MCF 10A (cell line): ENCODE measurements at regions of chr20 and their contacts with region 1.

Region 1: DNA sequence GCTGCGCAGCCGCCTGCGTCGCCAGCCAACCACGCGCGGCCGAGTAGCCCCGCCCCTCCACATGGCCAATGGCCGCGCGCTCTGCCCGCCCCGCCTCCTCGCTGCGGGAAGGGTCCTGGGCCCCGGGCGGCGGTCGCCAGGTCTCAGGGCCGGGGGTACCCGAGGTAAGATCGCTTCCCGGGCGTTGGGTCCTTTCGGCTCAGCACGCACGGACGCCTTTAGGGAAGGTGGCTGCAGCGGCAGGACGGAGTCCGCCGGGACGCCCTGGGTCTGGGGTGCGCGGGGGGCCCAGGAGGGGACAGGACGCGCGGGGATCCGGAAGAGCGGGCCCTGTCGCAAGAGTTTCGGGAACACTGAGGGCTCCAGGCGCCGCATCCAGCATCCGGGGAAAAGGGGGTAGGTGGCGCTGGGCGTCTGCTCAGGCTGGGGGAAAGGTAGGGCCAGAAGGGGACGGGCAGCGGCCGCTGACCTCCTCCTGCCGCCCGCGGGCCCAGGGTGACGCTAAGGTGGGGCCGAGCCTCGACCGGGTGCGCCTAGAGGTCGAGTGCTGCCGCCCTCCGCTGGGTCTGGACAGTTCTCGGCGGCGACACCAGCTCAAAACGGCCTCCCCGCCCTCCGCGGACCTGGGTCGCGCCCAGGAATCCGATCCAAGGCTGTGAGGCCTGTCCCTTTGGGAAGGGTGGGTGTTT is at the start of gene MAVS:
- DNase-seq: peak; percentile 86
- H3K4me3 Mint-ChIP-seq: peak within 1 kb of the TSS; percentile 83
- H3K27ac Mint-ChIP-seq: peak within 1 kb of the TSS; percentile 83
- H3K4me1 Mint-ChIP-seq: peaks cover 13% of the 10 kb centered on the region
- H3K27me3 Mint-ChIP-seq: no peaks in the 10 kb centered on the region
- CTCF ChIP-seq: no peak
- total RNA-seq, gene MAVS: 31.7 and 39.7 TPM in 2 replicates

Region 2: DNA sequence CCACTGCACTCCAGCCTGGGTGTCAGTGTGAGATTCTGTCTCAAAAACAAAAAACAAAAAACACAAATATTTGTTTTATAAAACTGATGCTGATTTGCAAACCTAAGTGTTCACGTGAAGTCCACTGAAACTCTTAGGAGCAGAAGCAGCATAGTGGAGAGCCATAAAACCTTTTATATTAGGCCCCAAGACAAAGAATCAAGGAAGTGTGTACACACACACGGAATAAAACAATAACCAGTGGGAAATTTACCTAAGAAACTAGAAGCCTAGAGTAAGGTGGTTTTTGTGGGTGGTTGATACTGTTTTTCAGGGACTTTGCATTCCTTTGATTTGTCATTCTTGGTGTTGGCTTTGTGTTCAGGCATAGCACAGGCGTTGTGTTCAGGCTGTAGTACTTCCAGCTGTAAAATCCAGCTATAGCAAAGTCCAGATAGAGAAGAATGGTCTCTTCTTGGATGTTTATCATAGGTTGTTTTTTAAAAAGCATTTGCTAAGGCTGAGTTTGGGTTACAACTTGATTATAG is 314.7 kb before region 1 on chr20:
- CTCF ChIA-PET with region 1: no interaction called
- POLR2A ChIA-PET with region 1: no interaction called
- intact Hi-C with region 1: no loop called
- DNase-seq: no peak
- H3K4me3 Mint-ChIP-seq: no peak overlapping the region
- H3K27ac Mint-ChIP-seq: no peak overlapping the region
- H3K4me1 Mint-ChIP-seq: peaks cover 14% of the 10 kb centered on the region
- H3K27me3 Mint-ChIP-seq: no peaks in the 10 kb centered on the region
- CTCF ChIP-seq: no peak

Region 3: DNA sequence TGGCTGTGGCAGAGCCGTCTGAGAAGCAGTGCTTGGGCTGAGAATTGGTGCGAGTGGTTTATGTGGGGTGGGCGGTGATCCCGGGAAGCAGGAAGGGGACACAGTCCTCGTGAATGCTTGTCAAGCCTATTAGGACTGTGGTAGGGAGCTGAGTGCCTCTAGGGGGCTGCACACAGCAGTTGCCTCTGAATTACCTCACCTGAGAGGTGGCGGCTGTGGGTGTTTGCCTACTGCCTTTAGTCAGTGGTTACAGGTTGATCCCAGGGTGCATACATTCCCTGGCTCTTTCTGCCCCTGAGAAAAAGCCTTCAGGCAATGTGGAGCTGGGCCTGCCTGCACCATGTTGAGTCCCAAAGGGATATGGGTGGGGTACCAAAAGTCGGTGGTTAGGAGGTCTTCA is 21.4 kb before region 1 on chr20:
- CTCF ChIA-PET with region 1: interaction called, 30 read pairs
- POLR2A ChIA-PET with region 1: interaction called, 64 read pairs
- intact Hi-C with region 1: loop called (anchors 2 kb)
- DNase-seq: no peak
- H3K4me3 Mint-ChIP-seq: no peak overlapping the region
- H3K27ac Mint-ChIP-seq: no peak overlapping the region
- H3K4me1 Mint-ChIP-seq: peaks cover 7% of the 10 kb centered on the region
- H3K27me3 Mint-ChIP-seq: no peaks in the 10 kb centered on the region
- CTCF ChIP-seq: no peak

Region 4: GRCh38 chr20:3995067-3995748 is 148.3 kb after region 1 on chr20:
- CTCF ChIA-PET with region 1: no interaction called
- POLR2A ChIA-PET with region 1: no interaction called
- intact Hi-C with region 1: no loop called
- DNase-seq: peak; percentile 17
- H3K4me3 Mint-ChIP-seq: no peak overlapping the region
- H3K27ac Mint-ChIP-seq: peak overlapping the region; percentile 27
- H3K4me1 Mint-ChIP-seq: peaks cover 16% of the 10 kb centered on the region
- H3K27me3 Mint-ChIP-seq: no peaks in the 10 kb centered on the region
- CTCF ChIP-seq: no peak